ENCODE measurements at regions of chr19 and their contacts with region 1.

Region 1: GRCh38 chr19:10292206-10292788 is 2.5 kb downstream of the ICAM5 start:
- DNase-seq: peak in 29 of 35 experiments; percentile 31 to 74 (median 51)
- ATAC-seq: peak; percentile 20 to 52 (median 26)
- H3K4me3 ChIP-seq: peak overlapping the region; percentile 39 to 67
- H3K4me3 Mint-ChIP-seq: peak overlapping the region; percentile 70 to 88 (median 73)
- H3K27ac ChIP-seq: no peak overlapping the region
- H3K27ac Mint-ChIP-seq: peak overlapping the region in 1 of 2 donors; percentile 16
- H3K4me1 ChIP-seq: peaks cover 33 to 89% of the 10 kb centered on the region in 2 experiments
- H3K4me1 Mint-ChIP-seq: peaks cover 57 to 69% (median 66%) of the 10 kb centered on the region in 3 donors
- H3K27me3 ChIP-seq: peaks cover 15 to 93% of the 10 kb centered on the region in 2 experiments
- H3K27me3 Mint-ChIP-seq: peaks cover 33 to 78% of the 10 kb centered on the region in 2 donors

Region 2: GRCh38 chr19:10332955-10333757 is 40.9 kb after region 1 on chr19 and contains the start of gene RAVER1:
- CTCF ChIA-PET with region 1: no interaction called
- POLR2A ChIA-PET with region 1: no interaction called
- DNase-seq: peak; percentile 91 to 100 (median 97)
- ATAC-seq: peak; percentile 93 to 99 (median 98)
- H3K4me3 ChIP-seq: peak within 1 kb of the TSS; percentile 71 to 89
- H3K4me3 Mint-ChIP-seq: peak within 1 kb of the TSS; percentile 92 to 95 (median 93)
- H3K27ac ChIP-seq: peak within 1 kb of the TSS; percentile 72
- H3K27ac Mint-ChIP-seq: peak within 1 kb of the TSS; percentile 94 to 97
- H3K4me1 ChIP-seq: peaks cover 12 to 58% of the 10 kb centered on the region in 2 experiments
- H3K4me1 Mint-ChIP-seq: peaks cover 27 to 38% (median 36%) of the 10 kb centered on the region in 3 donors
- H3K27me3 ChIP-seq: no peaks in the 10 kb centered on the region
- H3K27me3 Mint-ChIP-seq: no peaks in the 10 kb centered on the region
- total RNA-seq, gene RAVER1: 31.5 to 68.2 (median 61.2) TPM

Region 3: DNA sequence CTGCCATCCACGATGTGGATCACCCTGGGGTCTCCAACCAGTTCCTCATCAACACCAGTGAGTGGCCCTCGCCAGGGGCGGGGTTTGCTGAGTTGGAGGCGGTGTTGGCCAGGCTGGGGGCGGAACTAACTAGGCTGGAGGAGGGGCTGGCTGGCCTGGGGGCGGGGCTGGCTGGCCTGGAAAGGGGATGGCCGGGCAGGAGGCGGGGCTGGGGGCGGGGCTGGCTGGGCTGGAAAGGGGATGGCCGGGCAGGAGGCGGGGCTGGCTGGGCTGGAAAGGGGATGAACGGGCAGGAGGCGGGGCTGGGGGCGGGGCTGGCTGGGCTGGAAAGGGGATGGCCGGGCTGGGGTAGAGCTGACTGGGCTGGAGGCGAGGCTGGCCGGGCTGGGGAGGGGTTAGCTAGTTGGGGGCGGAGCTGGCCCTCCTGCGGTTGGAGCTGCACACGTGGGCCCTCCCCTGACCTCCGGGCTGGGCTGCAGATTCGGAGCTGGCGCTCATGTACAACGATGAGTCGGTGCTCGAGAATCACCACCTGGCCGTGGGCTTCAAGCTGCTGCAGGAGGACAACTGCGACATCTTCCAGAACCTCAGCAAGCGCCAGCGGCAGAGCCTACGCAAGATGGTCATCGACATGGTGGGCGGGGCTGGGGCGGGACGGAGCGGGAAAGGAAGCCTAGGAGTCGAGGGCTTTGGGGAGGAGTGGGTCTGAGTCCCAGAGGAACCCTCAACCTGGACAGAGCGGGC is 168.9 kb after region 1 on chr19:
- CTCF ChIA-PET with region 1: no interaction called
- POLR2A ChIA-PET with region 1: interaction called in 1 of 2 experiments, 11 read pairs
- DNase-seq: peak; percentile 54 to 89 (median 77)
- ATAC-seq: peak; percentile 85 to 86 (median 86)
- H3K4me3 ChIP-seq: peak overlapping the region; percentile 44 to 49
- H3K4me3 Mint-ChIP-seq: peak overlapping the region; percentile 55 to 71 (median 60)
- H3K27ac ChIP-seq: no peak overlapping the region
- H3K27ac Mint-ChIP-seq: peak overlapping the region; percentile 11 to 19
- H3K4me1 ChIP-seq: peaks cover 0 to 12% of the 10 kb centered on the region in 2 experiments
- H3K4me1 Mint-ChIP-seq: peaks cover 0 to 15% (median 8%) of the 10 kb centered on the region in 3 donors
- H3K27me3 ChIP-seq: peaks cover 0 to 4% of the 10 kb centered on the region in 2 experiments
- H3K27me3 Mint-ChIP-seq: no peaks in the 10 kb centered on the region